Posterior cingulate gyrus (tissue), 11 donors: ENCODE measurements at regions of chr19 and their contacts with region 1.

Region 1: DNA sequence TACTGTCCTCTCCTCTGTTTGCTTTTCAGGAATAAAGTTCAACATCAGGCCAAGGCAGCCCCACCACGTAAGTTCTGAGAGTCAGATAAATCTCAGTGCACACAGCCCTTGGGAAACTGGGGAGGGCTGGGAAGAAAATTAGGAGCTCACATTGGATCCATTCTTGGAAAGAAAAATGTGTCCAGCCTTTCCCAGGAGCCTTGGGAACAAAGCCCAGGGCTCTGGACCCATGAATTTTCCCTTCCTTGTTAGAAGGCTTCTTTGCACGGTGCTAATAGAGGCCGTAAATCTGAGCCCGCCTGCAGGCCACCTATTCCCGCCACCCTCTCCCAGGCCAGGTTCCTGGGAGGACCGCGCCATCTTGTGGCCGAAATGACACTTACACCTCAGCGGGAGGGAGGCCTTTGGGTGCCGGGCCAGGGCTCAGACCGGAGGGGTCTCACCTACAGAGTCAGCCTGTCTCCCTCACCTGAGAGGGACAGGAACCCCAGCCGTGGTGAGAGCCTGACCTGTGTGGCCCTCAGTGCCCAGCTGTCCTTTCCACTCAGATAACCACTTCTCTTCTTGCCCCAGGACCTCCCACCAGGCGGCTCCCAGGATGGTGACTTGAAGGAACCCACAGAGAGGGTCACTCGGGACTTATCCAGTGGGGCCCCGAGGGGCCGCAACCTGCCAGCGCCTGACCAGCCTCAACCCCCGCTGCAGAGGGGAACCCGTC is 25.1 kb upstream of the KCTD15 start:
- DNase-seq: peak; percentile 47 to 96 (median 80)

Region 2: DNA sequence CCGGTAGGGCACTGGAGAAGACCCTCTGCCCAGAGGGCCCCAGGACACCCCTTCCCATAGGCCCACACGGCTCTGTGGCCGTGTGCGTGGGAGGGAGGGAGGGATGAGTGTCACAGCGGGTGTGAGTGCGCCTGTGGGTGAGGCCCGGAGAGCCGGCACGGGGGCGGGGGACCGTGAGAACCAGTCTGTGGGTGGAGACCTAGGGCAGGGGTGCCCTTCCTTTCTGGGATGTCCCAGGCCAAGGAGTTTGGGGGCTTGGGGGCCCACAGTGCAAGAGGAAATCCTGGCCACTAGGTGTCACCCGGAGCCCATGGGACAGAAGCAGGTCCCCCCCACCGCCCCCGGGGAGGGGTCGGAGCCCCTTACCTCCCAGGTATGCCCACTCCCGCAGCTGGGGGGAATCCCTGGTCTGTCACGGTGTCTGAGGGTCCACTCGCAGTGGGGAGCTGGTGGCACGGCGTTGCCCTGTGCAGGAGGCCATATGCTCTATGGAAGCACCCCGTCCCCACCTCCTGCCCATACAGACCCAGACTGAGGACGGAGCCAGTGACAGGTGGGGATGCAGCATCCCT is 529.9 kb before region 1 on chr19:
- intact Hi-C with region 1: loop called (anchors 5 kb)
- DNase-seq: peak in 3 of 10 donors; percentile 31 to 79 (median 70)

Region 3: GRCh38 chr19:33416307-33417215 is 355.0 kb before region 1 on chr19:
- intact Hi-C with region 1: loop called (anchors 5 kb)
- DNase-seq: peak in 7 of 10 donors; percentile 44 to 93 (median 64)

Region 4: GRCh38 chr19:33430674-33431277 is 340.8 kb before region 1 on chr19:
- intact Hi-C with region 1: loop called (anchors 1 kb)
- DNase-seq: peak; percentile 57 to 96 (median 81)

Region 5: GRCh38 chr19:33720691-33721682 is 50.6 kb before region 1 on chr19:
- intact Hi-C with region 1: loop called (anchors 1 kb)
- DNase-seq: peak in 4 of 10 donors; percentile 19 to 64 (median 42)

Region 6: GRCh38 chr19:33731881-33732280 is 39.7 kb before region 1 on chr19:
- intact Hi-C with region 1: no loop called
- DNase-seq: peak in 1 of 10 donors; percentile 31

Region 7: GRCh38 chr19:33795370-33796163 is 24.0 kb after region 1 on chr19:
- intact Hi-C with region 1: no loop called
- DNase-seq: peak; percentile 27 to 94 (median 66)